AG04449 (cell line): ENCODE measurements at regions of chr10 and their contacts with region 1.

Region 1: DNA sequence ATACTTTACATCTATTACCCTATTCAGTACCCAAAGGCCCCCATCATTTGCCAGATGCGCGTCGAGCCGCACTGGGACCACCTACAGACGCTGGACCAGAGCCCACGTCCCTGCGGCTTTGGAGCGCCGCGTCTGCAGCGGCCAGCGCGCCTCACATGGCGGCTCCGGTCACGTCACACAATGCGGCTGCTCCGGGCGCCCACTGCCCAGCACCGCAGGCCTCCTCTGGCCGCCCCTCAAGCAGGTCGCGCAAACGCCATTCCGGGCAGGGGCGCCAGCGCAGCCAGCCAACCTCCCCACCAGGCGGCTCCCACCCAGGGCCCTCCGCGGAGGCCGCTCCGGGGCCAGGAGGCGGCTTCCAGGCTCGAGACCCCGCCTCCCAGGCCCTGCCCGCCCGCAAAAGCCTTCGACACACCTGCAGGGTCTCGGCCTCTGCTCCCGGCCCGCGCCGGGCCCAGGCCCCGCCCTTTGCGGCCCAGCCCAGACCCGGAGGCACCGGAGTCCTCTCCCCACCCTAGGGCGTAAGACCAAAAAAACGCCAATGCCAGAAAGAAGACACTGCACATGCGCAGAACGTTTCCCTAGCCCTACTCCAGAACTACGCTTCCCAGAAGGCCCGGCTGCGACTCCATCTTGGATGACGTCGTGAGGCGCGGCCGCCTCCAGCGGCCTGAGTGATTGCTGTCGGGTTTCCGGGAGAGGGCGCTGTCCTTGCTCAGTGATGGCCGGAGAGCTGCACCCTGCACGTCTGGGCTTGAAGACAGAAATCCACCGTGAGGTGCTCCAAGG is at the start of gene ZNF25:
- DNase-seq: peak; percentile 89
- H3K4me3 ChIP-seq: peak within 1 kb of the TSS; percentile 81
- CTCF ChIP-seq: peak; percentile 96

Region 2: DNA sequence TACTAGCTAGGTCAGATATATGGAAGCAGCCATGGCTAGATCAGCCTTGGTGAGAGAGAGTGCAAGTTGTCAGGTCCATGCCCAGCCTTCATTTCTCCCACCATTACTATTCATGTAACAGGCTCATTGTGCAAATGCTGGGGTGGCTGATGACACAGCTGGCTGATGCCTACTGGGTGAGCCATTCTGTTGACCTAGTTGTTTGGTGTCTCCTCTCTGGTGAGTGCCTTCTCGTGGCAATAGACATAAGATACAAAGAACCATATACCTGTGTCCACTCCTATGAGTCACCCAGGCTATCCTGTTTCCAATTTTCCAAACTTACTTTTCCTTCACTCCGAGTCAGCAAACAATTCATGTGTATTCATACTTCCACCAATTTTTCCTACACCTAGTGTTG is 45.9 kb before region 1 on chr10:
- CTCF ChIA-PET with region 1: no interaction called
- POLR2A ChIA-PET with region 1: no interaction called
- DNase-seq: no peak
- H3K4me3 ChIP-seq: no peak overlapping the region
- CTCF ChIP-seq: no peak

Region 3: DNA sequence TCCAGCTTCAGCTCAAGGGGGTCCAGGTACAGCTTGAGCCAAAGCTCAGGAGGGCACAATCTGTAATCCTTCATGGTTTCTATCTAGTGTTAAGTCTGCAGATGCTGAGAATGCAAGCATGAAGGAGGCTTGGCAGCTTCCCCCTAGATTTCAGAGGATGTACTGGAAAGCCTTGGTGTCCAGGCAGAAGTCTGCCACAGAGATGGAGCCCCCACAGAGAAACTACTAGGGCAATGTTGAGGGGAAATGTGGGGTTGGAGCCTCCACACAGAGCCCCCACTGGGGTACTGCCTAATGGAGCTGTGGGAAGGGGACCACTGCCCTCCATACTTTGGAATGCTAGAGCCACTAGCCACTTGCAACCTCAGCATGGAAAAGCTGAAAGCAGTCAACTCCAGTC is 11.3 kb before region 1 on chr10:
- CTCF ChIA-PET with region 1: interaction called, 19 read pairs
- POLR2A ChIA-PET with region 1: no interaction called
- DNase-seq: no peak
- H3K4me3 ChIP-seq: no peak overlapping the region
- CTCF ChIP-seq: no peak

Region 4: GRCh38 chr10:37992083-37992482 is 15.8 kb after region 1 on chr10:
- CTCF ChIA-PET with region 1: interaction called, 10 read pairs
- POLR2A ChIA-PET with region 1: interaction called, 3 read pairs
- DNase-seq: no peak
- H3K4me3 ChIP-seq: no peak overlapping the region
- CTCF ChIP-seq: no peak

Region 5: GRCh38 chr10:38010119-38010903 is 34.0 kb after region 1 on chr10 and contains the start of gene ZNF33A:
- CTCF ChIA-PET with region 1: interaction called, 25 read pairs
- POLR2A ChIA-PET with region 1: interaction called, 4 read pairs
- DNase-seq: peak; percentile 58
- H3K4me3 ChIP-seq: peak within 1 kb of the TSS; percentile 72
- CTCF ChIP-seq: peak; percentile 0